Mucosa of descending colon (tissue), 3 donors: ENCODE measurements at regions of chr20 and their contacts with region 1.

Region 1: GRCh38 chr20:50575847-50576720 is 65.9 kb downstream of the PTPN1 start:
- DNase-seq: peak in 2 of 3 donors; percentile 82 to 88
- ATAC-seq: peak; percentile 66
- H3K4me3 ChIP-seq: no peak overlapping the region
- H3K4me1 ChIP-seq: peaks cover 18% of the 10 kb centered on the region
- CTCF ChIP-seq: peak; percentile 34

Region 2: GRCh38 chr20:50070991-50071888 is 504.8 kb before region 1 on chr20:
- intact Hi-C with region 1: no loop called
- DNase-seq: peak; percentile 90 to 96 (median 96)
- ATAC-seq: peak; percentile 100
- H3K4me3 ChIP-seq: no peak overlapping the region
- H3K4me1 ChIP-seq: peaks cover 7% of the 10 kb centered on the region
- CTCF ChIP-seq: peak; percentile 99

Region 3: GRCh38 chr20:50179507-50180016 is 396.5 kb before region 1 on chr20:
- intact Hi-C with region 1: loop called in 1 of 2 experiments (anchors 5 kb)
- DNase-seq: no peak
- ATAC-seq: peak; percentile 25
- H3K4me3 ChIP-seq: no peak overlapping the region
- H3K4me1 ChIP-seq: no peaks in the 10 kb centered on the region
- CTCF ChIP-seq: no peak

Region 4: DNA sequence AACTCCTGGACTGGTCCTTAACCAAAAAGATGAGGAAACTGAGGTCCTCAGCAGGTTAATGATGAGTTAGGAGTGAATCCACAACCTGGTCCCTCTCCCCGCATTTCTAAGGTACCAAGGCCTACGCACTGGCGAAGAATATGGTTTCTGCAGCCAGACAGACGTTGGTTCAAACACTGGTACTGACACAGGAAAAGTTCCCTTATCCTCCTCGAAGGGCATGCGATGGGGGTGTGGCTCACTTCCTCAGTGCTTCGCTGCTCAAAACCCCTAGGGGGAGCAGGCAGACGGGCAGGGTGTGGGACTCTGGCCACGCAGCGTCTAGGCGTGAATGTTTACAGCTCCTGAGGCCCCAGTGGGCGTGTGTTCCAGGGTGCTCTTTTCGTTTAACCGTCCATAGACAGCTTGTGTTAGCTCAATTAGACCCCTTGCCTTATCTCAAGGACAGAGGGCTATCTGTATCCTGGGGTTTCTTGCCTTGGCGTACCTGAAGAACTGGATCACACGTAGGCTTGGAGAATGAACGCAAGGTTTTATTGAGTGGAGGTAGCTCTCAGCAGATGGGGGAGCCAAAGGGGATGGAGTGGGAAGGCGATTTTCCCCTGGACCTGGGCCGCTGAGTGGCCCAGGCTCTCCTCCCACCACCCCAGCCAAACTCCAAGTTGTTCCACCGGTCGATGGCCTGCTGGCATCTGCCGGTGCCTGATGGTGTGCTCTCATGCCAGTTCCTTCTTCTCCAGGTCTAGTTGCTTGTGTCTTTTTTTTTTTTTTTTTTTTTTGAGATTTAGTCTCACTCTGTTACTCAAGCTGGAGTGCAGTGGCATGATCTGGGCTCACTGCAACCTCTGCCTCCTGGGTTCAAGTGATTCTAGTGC is 97.7 kb before region 1 on chr20:
- intact Hi-C with region 1: loop called (anchors 5 to 10 kb)
- DNase-seq: peak; percentile 81 to 85 (median 85)
- ATAC-seq: peak; percentile 88
- H3K4me3 ChIP-seq: no peak overlapping the region
- H3K4me1 ChIP-seq: peaks cover 9% of the 10 kb centered on the region
- CTCF ChIP-seq: peak; percentile 69